Right ventricle myocardium inferior (tissue), 1 donor: ENCODE measurements at regions of chr11 and their contacts with region 1.

Region 1: DNA sequence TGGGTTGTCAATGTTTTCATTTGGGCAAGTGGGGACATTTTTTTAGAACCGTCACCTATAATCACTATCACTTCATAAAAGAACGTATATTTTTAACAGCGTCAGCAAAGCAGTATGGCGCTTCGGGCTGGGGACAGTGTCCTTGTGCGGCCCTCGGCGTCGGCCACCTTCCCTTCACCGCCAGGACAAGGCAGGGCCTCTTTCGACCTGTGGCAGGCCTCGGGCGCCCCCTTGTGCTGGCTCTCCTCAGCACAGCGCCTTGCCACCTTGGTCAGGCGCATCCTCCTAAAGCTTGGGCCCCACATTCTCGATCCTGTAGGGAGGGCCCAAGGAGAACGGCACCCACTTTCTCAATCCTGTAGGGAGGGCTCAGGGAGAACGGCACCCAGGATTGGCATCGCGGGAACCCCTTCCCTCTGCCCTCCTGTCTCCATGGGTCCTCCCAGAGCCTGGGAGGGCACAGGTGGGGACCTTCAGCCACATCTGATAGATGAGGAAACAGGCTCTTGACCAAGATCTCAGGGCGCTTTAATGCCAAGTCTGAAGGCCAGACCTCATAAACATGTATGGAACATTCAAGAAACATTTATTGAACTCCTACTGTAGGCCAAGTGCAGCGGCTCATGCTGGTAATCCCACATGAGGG is 11.5 kb upstream of the FADD start:
- DNase-seq: peak; percentile 88
- ATAC-seq: peak; percentile 82

Region 2: GRCh38 chr11:69683764-69684333 is 507.8 kb before region 1 on chr11:
- intact Hi-C with region 1: loop called (anchors 5 kb)
- DNase-seq: no peak
- ATAC-seq: no peak

Region 3: DNA sequence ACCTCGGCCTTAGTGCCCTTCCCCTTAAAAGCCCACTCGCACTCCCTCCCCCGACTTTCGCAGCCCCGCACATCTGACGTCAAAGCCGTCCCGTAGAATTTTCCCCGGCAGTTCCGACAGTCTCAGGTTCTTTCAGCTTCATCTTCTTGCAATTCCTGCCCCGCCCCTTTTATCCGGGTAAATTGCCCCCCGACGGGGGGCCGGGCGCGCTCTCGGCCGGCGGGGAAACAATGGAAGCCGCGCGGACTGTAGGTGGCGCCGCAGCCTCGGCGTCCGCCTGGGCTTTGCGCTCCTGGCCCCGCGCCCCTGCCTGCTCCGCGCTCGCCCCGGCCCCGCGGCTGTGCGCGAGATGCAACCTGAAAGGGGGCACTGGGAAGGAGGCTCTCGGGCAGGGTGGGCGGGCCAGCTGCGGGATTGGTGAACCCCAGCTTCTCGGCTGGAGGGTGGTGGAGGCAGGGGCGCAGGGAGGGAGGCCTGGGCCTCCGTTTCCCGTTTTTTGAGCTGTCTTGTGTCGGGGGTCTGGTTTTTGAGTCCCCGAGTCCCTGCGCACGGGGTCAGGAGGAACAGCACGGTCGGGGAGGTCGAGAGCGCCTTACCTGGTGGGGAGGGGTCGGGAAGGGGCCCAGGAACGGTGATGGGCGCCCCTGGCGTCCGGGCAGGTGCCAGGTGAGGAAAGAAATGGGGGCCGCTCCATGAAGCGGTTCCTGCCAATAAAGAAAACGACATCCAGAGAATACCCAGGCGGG is 486.9 kb before region 1 on chr11:
- intact Hi-C with region 1: loop called (anchors 5 kb)
- DNase-seq: no peak
- ATAC-seq: no peak

Region 4: DNA sequence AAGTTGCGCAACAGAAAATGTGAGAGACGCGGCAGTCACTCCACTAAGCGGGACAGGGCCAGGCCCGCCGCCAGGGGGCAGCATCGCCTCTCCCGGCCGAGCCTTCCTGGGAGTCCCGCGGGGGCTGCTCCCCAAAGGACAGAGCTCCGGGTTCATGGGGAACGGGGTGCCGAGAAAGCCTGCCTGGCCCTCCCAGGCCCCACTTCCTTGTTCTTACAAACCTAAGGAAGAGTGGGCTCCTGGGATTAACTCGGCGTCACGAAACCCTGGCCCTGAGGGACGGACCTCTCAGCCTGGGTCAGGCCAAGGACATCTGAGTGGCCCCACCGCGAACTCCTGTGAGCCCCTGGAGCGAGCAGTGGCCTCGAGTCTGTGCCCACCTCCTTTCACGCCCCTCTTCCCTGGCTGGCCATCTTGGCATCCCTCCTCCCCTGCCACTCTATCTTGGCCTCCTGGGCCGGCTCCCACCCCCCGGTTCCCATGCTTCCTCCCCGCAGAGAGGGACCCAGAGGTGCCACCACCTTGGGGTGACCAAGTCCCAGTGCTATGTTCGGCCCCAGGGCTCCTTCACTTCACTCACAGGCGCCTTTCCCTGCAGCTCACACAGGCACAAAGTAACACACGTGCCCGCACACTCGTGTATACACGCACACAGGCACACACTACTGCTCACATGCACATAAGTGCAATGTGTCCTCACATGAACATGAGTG is 272.5 kb before region 1 on chr11:
- intact Hi-C with region 1: loop called (anchors 1 kb)
- DNase-seq: peak; percentile 87
- ATAC-seq: peak; percentile 80

Region 5: GRCh38 chr11:69943066-69943465 is 248.6 kb before region 1 on chr11:
- intact Hi-C with region 1: loop called (anchors 1 kb)
- DNase-seq: no peak
- ATAC-seq: no peak

Region 6: DNA sequence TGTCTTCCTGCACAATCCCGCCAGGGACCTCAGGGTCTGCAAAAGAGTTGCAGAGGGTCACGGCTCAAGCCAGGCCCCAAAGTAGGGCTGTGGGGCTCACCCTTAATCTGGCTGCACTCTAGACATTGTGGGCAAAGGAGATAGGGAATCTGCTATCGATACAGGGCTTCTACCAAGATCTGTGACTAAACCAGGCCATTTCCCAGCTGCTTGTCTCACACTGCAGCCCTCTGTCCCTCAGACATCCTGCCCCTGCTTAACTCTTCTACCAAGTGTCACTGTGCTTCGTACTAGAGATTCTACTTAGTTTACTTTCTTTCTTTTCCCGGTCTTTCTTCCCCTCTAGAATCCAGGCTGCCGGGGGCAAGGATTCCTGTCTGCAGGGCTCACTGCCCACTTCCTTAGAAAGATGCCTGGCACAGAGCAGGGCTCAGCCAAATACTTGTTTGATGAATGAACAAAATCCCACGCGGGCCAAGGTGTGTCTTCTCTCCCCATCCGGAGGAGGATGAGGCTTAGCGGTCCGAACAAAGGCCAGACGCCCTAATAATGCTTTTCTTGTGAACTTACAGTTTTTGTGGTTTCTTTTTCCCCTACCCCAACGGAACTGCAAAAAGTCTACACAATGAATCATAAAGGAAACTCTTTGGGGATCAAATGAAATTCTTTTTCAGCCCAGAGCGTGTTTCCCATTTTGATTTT is 174.8 kb before region 1 on chr11:
- intact Hi-C with region 1: no loop called
- DNase-seq: no peak
- ATAC-seq: no peak

Region 7: GRCh38 chr11:70423523-70424505 is 232.2 kb after region 1 on chr11:
- intact Hi-C with region 1: no loop called
- DNase-seq: no peak
- ATAC-seq: no peak